ENCODE measurements at regions of chr6 and their contacts with region 1.

Region 1: DNA sequence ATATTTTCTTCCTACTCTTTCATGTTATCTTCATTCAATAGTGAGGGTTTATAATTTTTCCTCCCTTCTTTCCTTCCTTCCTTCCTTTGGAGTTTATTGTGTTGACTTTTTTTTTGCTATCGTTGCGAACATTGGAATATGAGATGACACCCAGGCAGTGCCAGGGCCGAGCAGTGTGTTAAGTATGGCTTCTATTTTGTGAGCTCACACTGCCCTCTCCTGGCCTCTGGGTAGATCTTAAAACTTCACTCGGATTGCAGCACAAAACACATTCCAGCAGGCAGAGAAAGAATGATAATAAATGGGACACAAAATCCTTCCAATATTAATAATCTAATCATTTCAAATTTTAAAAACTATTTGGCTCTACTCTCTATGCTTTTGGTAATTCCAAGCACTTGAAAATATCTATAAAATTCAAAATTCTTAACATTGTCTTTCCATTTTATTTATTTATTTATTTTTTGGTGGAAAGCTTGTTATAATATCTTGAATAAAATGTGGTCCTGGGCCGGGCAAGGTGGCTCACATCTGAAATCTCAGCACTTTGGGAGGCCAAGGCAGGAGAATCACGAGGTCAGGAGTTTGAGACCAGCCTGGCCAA is 147.4 kb upstream of the OLIG3 start:
- DNase-seq: peak; percentile 64
- ATAC-seq: peak; percentile 94

Region 2: DNA sequence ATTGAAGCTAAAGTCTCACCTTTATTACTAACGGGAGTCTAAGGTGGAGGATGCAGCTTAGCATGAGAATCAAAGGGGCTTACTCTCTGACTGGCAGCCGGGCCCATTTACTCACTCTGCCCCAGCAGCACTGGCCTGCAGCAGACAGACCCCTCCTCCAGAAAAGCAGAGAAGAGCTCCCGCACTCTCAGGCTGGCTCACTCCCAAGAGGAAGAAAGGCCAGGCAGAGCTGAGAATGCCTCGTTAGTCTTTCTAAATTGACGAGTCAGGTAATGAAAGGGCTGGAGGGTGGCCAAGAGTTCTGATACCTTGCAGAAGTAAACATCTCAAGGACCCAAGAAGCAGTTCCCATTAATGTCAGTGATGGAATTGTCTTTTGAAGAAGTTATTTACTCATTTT is 552.3 kb before region 1 on chr6:
- intact Hi-C with region 1: loop called (anchors 10 kb)
- DNase-seq: no peak
- ATAC-seq: no peak

Region 3: GRCh38 chr6:137271245-137272183 is 370.1 kb before region 1 on chr6:
- intact Hi-C with region 1: loop called (anchors 5 kb)
- DNase-seq: no peak
- ATAC-seq: peak; percentile 70

Region 4: DNA sequence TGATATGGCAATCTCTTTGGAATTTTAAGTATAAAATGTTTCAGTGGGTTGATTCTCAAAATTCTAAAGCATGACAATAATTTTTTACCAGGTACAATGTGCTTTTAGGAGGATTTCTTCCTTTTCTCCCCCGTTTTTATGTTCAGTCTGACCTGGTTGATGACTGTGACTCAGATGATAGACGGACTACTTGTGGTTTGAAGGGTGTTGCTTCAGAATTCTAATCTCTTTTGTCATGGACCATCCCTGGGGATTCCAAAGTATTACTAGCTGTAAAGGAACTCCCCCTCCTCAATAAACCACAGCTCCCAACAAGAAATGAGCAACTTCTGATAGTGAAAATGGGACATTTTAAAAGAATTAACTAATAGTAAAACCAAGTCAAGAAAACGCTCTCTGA is 190.5 kb after region 1 on chr6:
- intact Hi-C with region 1: no loop called
- DNase-seq: no peak
- ATAC-seq: no peak

Measured in left ventricle myocardium superior (tissue), 1 donor.